ENCODE measurements at regions of chr10 and their contacts with region 1.

Region 1: DNA sequence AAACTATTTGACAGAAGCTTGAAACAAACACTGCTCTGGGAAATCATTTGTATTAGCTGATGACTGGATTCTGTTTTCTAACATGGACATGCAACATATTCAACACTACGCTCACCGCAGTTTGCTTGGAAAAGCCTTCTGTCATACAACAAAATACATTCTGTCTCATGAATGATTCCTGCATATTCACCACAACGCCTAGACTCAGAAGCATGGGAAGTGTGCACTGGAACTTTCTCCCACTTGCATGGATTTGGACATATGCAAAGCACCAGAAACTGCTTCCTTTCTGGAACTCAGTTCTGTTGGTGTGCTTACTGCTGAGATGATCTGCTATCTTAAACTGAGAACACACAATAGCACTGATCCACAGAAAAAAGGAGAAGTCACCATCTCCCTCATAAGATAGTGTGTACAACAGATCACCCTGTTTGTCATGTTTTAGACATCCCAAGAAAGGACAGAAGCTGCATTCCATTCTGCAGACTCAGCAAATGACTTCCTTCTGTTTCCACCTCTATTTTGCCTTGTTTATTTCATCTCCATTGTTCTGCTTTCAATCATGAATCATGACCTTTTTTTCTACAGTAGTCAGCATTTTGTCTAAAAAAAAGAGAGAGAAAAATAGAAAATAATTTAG is 115.8 kb downstream of the HTR7 start:
- DNase-seq: no peak
- CTCF ChIP-seq: no peak

Region 2: DNA sequence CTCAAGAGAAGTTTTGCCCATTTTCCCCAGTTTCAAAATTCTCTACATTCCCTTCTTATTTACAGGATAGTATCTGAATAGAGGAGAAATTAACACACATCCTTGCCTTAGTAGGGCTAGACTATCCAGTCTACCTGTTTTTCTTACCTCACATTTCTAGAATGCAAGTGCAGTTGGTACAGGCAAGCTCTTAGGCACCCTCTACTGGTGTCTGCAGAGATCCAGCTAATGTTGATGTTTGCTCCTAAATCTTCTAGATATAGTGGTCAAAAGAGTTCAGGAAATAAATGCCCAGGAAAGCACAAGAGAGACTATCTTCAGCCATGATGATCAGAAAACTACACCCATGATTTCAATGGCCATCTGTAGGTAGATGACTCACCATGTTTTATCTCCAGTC is 89.5 kb before region 1 on chr10:
- in situ Hi-C with region 1: no loop called
- DNase-seq: no peak
- CTCF ChIP-seq: peak; percentile 36

Region 3: DNA sequence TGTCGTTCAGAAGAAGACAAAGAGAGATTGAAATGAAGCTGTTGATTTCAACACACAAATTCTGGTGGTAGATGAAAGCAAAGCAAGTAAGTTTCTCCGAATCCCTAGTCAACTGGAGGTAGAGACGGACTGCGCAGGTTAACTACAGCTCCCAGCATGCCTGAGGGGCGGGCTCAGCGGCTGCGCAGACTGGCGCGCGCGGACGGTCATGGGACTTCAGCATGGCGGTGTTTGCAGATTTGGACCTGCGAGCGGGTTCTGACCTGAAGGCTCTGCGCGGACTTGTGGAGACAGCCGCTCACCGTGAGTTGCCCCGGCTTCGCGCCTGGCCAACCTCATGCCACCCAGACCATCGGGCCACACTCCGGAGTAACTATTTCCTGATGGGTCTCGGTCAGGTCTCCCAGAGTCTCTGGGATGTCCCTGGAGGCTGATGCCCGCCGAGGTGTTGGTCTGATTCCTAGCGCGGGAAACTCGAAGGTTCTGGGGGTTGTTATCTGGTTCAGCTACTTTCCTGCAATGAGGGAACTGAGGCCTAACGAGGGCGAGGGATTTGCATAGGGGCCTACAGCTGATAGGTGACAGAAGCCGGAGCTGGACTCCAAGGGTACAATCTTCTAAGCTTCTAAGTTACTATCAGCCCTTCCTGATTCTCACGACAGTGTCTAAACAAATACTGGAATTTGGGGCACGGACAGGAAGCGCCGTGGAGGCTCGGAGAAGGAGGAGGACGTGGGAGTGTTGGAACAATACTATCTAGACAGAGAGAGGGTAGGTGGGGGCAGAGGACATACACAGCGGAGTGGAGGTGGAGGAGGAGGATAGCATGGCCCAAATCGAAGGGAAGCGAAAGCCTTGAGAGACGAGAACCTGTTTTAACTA is 130.0 kb after region 1 on chr10 and contains the start of gene RPP30:
- in situ Hi-C with region 1: loop called (anchors 25 kb)
- DNase-seq: peak; percentile 82
- CTCF ChIP-seq: no peak